Activated naive CD4-positive, alpha-beta T cell treated with anti-CD3 and anti-CD28 coated beads for 36 hours (primary cell): ENCODE measurements at regions of chr19 and their contacts with region 1.

Region 1: DNA sequence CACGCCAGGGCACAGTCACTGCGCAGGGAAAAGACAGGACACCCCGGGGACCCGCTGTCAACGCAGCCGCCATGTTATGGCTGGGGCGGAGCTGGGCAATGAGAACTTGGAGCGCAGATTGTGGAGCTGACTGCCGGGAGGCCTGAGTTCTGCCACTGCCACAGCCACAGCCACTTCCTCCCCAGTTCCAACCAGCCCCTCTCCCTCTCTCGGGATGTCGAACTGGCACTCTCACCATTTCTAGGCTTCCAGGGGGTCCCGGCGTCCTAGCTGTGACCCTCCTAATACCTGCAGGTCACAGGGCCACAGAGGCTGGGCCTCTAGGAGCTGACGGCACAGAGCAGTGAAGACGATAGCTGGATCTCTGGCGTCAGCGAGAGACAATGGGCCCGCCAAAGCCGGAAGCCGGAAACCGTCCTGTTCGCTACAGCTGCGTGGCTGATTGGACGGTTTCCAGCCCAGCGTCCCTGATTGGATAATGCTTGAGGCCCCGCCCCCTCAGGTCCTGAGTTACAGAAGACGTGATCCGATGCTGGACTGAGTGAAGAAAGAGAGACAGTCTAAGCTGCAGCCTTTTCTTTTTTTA is at the start of gene ZNF506:
- DNase-seq: peak; percentile 99
- H3K4me3 Mint-ChIP-seq: peak within 1 kb of the TSS; percentile 100
- H3K27ac Mint-ChIP-seq: peak within 1 kb of the TSS; percentile 100
- H3K4me1 Mint-ChIP-seq: peaks cover 44% of the 10 kb centered on the region
- H3K27me3 Mint-ChIP-seq: no peaks in the 10 kb centered on the region
- total RNA-seq, gene ZNF506: 32.6 to 34.0 TPM

Region 2: DNA sequence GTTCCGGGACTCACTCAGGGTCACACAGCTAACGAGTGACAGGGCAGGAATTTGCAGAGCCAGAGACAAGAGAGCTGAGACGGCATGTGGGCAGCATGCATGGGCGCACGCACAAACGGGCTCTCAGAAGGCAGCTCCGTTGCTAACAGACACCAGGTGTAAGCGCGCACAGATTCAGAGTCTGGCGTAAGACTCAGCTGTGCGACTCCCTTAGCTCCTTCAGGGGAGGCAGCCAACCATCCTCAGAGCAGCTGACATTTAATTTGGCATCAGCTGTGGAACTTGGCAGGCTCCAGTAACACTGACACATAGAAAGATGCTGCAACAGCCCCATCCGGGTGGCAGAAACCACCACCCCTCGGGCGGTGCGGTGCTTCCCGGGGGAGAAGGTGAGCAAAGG is 540.9 kb before region 1 on chr19:
- CTCF ChIA-PET with region 1: no interaction called
- intact Hi-C with region 1: no loop called
- DNase-seq: no peak
- H3K4me3 Mint-ChIP-seq: no peak overlapping the region
- H3K27ac Mint-ChIP-seq: no peak overlapping the region
- H3K4me1 Mint-ChIP-seq: no peaks in the 10 kb centered on the region
- H3K27me3 Mint-ChIP-seq: no peaks in the 10 kb centered on the region

Region 3: DNA sequence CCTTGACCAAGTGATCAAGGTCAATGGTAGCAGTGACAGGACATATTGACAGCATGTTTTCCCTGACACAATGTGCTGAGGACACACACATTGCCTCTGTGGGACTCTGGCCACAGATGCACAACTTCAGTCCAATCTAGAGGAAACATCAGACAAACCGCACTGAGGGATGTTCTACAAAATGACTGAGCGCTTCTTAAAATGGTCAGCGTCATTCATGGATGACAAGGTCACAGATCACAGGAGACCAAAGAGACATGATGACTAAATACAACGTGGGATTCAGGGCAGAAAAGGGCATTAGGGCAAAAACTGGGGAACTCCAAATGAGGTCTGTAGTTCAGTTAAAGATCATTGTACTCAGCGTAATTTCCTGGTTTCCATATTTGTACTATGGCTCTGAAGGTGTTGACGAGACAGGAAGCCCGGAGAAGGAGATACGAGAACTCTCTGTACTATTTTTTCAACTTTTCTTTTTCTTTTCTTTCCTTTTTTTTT is 223.6 kb before region 1 on chr19:
- CTCF ChIA-PET with region 1: no interaction called
- intact Hi-C with region 1: loop called (anchors 1 kb)
- DNase-seq: peak; percentile 78
- H3K4me3 Mint-ChIP-seq: peak overlapping the region; percentile 75
- H3K27ac Mint-ChIP-seq: peak overlapping the region; percentile 100
- H3K4me1 Mint-ChIP-seq: peaks cover 85% of the 10 kb centered on the region
- H3K27me3 Mint-ChIP-seq: no peaks in the 10 kb centered on the region

Region 4: DNA sequence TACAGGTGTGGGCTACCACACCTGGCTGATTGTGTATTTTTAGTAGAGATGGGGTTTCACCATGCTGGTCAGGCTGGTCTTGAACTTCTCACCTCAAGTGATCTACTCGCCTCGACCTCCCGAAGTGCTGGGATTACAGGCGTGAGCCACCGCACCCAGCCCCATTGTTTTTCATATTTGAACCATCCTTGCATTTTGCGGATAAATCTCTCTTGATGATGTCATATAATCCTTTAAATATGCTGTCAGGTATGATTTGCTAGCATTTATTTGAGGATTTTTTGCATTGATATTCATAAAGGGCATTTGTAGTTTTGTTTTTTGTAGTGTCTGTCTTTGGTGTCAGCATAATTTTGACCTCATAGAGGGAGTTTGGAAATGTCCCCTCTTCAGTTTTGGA is 147.1 kb before region 1 on chr19:
- CTCF ChIA-PET with region 1: no interaction called
- intact Hi-C with region 1: no loop called
- DNase-seq: no peak
- H3K4me3 Mint-ChIP-seq: no peak overlapping the region
- H3K27ac Mint-ChIP-seq: no peak overlapping the region
- H3K4me1 Mint-ChIP-seq: peaks cover 34% of the 10 kb centered on the region
- H3K27me3 Mint-ChIP-seq: no peaks in the 10 kb centered on the region

Region 5: DNA sequence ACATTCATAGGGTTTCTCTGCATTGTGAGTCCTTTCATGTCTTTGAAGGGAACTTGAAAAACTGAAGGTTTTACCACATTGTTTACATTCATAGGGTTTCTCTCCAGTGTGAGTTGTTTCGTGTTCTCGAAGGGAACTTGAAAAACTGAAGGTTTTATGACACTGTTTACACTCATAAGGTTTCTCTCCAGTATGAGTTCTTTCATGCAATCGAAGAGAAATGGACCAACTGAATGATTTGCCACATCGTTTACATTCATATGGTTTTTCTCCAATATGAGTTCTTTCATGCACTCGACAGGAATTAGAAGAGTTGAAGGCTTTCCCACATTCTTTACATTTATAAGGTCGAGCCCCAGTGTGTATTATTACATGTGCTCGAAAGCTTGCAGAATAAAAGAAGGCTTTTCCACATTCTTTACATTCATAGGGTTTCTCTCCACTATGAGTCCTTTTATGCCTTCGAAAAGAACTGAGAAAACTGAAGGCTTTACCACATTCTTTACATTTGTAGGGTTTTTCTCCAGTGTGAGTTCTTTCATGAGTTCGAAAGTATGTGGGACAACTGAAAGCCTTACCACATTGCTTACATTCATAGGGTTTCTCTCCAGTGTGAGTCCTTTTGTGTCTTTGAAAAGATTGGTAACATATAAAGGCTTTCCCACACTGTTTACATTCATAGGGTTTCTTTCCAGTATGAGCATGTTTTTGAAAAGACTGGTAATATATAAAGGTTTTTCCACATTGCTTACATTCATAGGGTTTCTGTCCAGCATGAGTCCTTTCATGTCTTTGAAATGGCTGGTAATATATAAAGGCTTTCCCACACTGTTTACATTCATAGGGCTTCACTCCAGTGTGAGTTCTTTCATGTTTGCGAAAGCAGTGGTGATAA is 109.3 kb before region 1 on chr19:
- CTCF ChIA-PET with region 1: no interaction called
- intact Hi-C with region 1: no loop called
- DNase-seq: no peak
- H3K4me3 Mint-ChIP-seq: no peak overlapping the region
- H3K27ac Mint-ChIP-seq: no peak overlapping the region
- H3K4me1 Mint-ChIP-seq: no peaks in the 10 kb centered on the region
- H3K27me3 Mint-ChIP-seq: no peaks in the 10 kb centered on the region

Region 6: GRCh38 chr19:19776041-19777008 is 45.1 kb before region 1 on chr19:
- CTCF ChIA-PET with region 1: interaction called, 7 read pairs
- intact Hi-C with region 1: loop called (anchors 1 kb)
- DNase-seq: peak; percentile 95
- H3K4me3 Mint-ChIP-seq: peak overlapping the region; percentile 90
- H3K27ac Mint-ChIP-seq: peak overlapping the region; percentile 90
- H3K4me1 Mint-ChIP-seq: peaks cover 44% of the 10 kb centered on the region
- H3K27me3 Mint-ChIP-seq: no peaks in the 10 kb centered on the region

Region 7: DNA sequence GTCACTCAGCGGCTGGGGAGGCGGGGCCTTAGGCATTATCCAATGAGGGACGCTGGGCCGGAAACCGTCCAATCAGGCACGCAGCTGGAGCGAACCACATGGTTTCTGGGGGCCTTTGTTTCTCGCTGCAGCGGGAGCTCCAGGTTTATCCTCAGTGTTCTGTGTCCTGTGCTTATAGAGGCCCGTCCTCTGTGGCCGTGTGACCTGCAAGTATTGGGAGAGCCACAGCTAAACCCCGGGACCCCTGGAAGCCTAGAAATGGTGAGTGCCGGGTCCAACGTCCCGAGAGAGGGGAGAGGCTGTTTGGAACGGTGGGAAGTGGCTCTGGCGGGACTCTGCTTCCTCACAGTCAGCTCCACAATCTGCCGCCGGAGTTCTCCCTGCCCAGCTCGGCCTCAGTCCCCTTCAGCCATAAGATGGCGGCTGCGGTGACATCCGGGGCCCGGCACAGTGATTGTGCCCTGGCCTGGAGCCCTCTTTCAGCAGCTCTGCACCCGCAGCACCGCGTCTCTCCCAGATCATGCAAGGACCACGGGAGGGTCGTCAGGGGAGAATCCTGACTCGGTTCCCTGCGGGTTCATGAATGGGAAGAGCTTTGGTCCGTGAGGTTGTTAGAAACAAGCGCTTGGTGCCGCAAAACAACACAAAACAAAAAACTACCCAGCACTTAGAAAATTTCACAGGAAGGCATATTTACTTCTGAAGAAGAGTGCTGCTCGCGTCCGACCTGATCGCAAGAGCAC is 44.5 kb after region 1 on chr19 and contains the start of gene ZNF253:
- CTCF ChIA-PET with region 1: interaction called, 3 read pairs
- intact Hi-C with region 1: loop called (anchors 1 kb)
- DNase-seq: peak; percentile 99
- H3K4me3 Mint-ChIP-seq: peak within 1 kb of the TSS; percentile 100
- H3K27ac Mint-ChIP-seq: peak within 1 kb of the TSS; percentile 99
- H3K4me1 Mint-ChIP-seq: peaks cover 26% of the 10 kb centered on the region
- H3K27me3 Mint-ChIP-seq: no peaks in the 10 kb centered on the region
- total RNA-seq, gene ZNF253: 6.1 to 9.6 TPM

Region 8: GRCh38 chr19:19900729-19901444 is 79.4 kb after region 1 on chr19 and contains the start of gene ZNF93:
- CTCF ChIA-PET with region 1: interaction called, 3 read pairs
- intact Hi-C with region 1: loop called (anchors 1 kb)
- DNase-seq: peak; percentile 98
- H3K4me3 Mint-ChIP-seq: peak within 1 kb of the TSS; percentile 97
- H3K27ac Mint-ChIP-seq: peak within 1 kb of the TSS; percentile 95
- H3K4me1 Mint-ChIP-seq: peaks cover 28% of the 10 kb centered on the region
- H3K27me3 Mint-ChIP-seq: no peaks in the 10 kb centered on the region
- total RNA-seq, gene ZNF93: 15.2 to 16.6 TPM